ENCODE measurements at regions of chr18 and their contacts with region 1.

Region 1: GRCh38 chr18:3593904-3594661 is 144.1 kb downstream of the TGIF1 start:
- DNase-seq: peak; percentile 96
- H3K4me3 Mint-ChIP-seq: peak overlapping the region; percentile 82
- H3K27ac Mint-ChIP-seq: peak overlapping the region; percentile 98
- H3K4me1 Mint-ChIP-seq: peaks cover 40% of the 10 kb centered on the region
- H3K27me3 Mint-ChIP-seq: no peaks in the 10 kb centered on the region
- CTCF ChIP-seq: peak; percentile 80

Region 2: GRCh38 chr18:2442791-2443398 is 1151.2 kb before region 1 on chr18:
- CTCF ChIA-PET with region 1: no interaction called
- POLR2A ChIA-PET with region 1: no interaction called
- intact Hi-C with region 1: no loop called
- DNase-seq: no peak
- H3K4me3 Mint-ChIP-seq: no peak overlapping the region
- H3K27ac Mint-ChIP-seq: no peak overlapping the region
- H3K4me1 Mint-ChIP-seq: no peaks in the 10 kb centered on the region
- H3K27me3 Mint-ChIP-seq: no peaks in the 10 kb centered on the region
- CTCF ChIP-seq: no peak

Region 3: GRCh38 chr18:3261371-3262246 is 332.5 kb before region 1 on chr18 and contains the start of gene MYL12B:
- CTCF ChIA-PET with region 1: interaction called, 7 read pairs
- POLR2A ChIA-PET with region 1: interaction called, 30 read pairs
- intact Hi-C with region 1: loop called (anchors 5 kb)
- DNase-seq: peak; percentile 78
- H3K4me3 Mint-ChIP-seq: peak within 1 kb of the TSS; percentile 80
- H3K27ac Mint-ChIP-seq: peak within 1 kb of the TSS; percentile 82
- H3K4me1 Mint-ChIP-seq: peaks cover 43% of the 10 kb centered on the region
- H3K27me3 Mint-ChIP-seq: no peaks in the 10 kb centered on the region
- CTCF ChIP-seq: no peak
- total RNA-seq, gene MYL12B: 175 and 229 TPM in 2 replicates

Region 4: DNA sequence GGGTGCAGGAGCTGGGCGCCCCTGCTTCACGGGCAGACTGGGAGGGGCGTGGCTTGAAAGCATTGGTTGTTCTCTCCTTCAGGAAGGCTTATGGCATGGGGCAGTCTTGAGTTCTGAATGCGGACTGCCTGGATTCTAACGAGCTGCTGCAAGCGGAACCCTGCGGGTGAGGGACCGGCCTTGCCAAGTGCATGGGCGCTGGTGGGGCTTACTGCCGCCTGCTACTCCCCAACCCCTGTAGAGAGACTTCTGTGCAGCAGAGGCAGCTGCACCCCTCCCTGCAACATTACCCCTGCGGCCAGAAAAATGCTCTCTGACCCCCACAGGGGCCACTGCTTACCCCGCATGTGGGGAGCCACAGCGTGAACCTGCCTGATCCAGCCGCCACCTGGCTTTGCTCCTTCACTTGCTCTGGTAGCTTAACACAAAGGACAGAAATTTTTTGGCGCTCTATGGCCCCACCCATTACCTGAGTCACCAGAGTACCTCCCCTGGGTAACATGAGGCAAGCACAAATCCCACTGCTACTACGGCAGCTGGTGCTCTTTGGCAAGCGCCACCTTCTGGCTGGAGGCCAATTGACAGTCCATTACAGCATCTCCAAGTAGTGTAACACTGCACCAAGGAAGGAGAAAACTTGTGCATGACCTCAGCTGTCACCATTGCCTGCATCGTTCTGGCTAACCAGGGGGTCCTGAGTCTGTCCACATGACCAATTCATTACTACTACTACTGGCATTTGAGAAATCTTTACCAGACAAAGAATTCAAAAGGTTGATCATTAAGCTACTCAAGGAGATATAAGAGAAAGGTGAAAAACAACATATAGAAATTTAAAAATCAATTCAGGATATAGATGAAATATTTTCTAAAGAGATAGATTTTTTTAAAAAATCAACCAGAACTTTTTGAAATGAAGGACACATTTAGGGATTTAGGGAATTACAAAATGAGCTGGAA is 296.8 kb before region 1 on chr18:
- CTCF ChIA-PET with region 1: interaction called, 20 read pairs
- POLR2A ChIA-PET with region 1: interaction called, 29 read pairs
- intact Hi-C with region 1: no loop called
- DNase-seq: peak; percentile 97
- H3K4me3 Mint-ChIP-seq: peak overlapping the region; percentile 95
- H3K27ac Mint-ChIP-seq: peak overlapping the region; percentile 47
- H3K4me1 Mint-ChIP-seq: peaks cover 5% of the 10 kb centered on the region
- H3K27me3 Mint-ChIP-seq: no peaks in the 10 kb centered on the region
- CTCF ChIP-seq: peak; percentile 36

Region 5: GRCh38 chr18:3380384-3380961 is 213.6 kb before region 1 on chr18:
- CTCF ChIA-PET with region 1: interaction called, 4 read pairs
- POLR2A ChIA-PET with region 1: no interaction called
- intact Hi-C with region 1: loop called (anchors 10 kb)
- DNase-seq: peak; percentile 74
- H3K4me3 Mint-ChIP-seq: no peak overlapping the region
- H3K27ac Mint-ChIP-seq: no peak overlapping the region
- H3K4me1 Mint-ChIP-seq: no peaks in the 10 kb centered on the region
- H3K27me3 Mint-ChIP-seq: no peaks in the 10 kb centered on the region
- CTCF ChIP-seq: peak; percentile 19

Region 6: DNA sequence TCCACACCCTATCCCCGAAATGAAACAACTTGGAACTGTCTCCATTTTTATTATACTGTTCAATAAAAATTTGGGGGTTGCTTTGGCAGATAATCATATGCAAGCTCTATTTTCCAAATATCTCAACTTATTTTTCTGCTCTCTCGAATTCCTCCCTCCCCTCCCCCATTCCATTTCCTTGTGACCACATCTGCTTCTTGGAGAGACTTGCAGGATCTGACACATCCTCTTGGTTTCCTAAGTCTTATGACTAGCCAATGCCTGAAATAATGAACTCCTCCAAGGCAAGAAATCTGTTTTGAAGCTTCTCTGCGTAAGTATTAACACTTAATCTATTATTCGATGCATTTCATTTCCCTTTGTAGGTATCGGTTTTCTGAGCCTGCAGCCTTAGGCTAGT is 128.0 kb before region 1 on chr18:
- CTCF ChIA-PET with region 1: interaction called, 19 read pairs
- POLR2A ChIA-PET with region 1: interaction called, 20 read pairs
- intact Hi-C with region 1: no loop called
- DNase-seq: peak; percentile 77
- H3K4me3 Mint-ChIP-seq: no peak overlapping the region
- H3K27ac Mint-ChIP-seq: no peak overlapping the region
- H3K4me1 Mint-ChIP-seq: peaks cover 13% of the 10 kb centered on the region
- H3K27me3 Mint-ChIP-seq: no peaks in the 10 kb centered on the region
- CTCF ChIP-seq: no peak

Region 7: DNA sequence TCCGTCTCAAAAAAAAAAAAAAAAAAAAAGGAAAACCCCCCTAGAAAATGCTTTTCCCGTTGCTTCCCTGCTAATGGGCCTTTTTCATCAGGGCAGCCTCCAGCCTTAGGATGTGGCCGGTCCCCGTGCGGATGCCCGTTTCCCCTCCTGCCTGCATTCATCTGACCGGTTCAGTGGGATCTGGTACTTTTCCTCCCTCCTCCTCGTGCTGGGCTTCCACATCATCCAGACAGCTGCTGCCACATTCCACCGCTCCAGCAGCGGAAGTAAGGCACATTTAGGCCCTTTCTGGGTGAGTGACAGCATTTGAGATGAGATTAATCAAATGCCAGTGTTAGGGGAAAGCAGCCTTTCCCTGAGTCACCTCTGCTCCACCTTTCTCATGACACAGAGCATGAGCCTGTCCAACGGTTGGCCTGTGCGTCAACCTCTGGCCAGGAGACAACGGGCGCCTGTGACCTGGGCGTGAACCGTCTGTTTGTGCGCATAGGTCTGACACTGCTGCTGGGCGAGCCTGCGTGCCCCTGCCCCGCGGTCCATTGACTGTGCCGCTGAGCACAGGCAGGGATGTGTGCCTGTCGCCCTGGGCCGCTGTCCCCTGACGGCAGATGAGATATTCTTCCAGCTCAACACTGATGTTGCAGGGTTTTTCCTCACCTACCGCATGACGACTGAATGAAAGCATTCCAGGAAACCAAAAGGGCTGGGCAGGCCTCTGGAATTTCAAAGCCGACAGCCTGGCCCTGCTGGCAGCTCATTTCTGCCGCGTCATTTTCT is 29.9 kb after region 1 on chr18:
- CTCF ChIA-PET with region 1: interaction called, 13 read pairs
- POLR2A ChIA-PET with region 1: interaction called, 103 read pairs
- intact Hi-C with region 1: loop called (anchors 2 kb)
- DNase-seq: peak; percentile 95
- H3K4me3 Mint-ChIP-seq: peak overlapping the region; percentile 74
- H3K27ac Mint-ChIP-seq: peak overlapping the region; percentile 99
- H3K4me1 Mint-ChIP-seq: peaks cover 35% of the 10 kb centered on the region
- H3K27me3 Mint-ChIP-seq: no peaks in the 10 kb centered on the region
- CTCF ChIP-seq: no peak

Measured in MCF 10A (cell line).